BJ (cell line): ENCODE measurements at regions of chr9 and their contacts with region 1.

Region 1: DNA sequence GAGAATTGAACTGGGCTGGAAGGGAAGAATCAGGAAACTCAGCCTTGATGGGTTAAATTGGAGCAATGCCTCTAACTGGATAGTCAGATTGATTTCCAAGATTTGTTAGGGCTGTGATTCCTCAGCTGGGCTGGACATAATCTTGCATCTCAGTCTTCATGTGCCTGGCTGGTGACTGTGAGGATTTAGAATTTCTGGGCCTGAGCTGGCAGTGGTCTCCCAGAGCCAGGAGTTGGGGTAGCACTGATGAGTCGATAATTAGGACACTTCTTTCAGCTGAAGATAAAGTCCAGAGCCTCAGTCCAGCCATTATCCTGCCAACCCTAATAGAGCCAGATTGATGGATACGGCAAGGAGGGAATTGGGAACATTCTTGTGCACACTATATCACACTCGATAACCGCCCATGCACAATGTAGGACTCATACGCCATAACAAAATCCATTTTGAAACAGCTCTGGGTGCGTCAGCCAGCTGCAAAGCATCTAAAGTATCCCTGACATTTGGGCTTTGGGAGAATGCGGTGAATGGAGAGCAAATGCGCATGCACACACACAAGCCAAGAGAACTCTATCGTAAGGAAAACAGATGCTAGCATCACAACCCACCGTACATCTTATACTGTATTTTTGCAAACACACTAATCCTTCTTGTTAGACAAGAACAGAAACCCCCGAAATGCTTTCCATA is 405.1 kb upstream of the KLF4 start:
- DNase-seq: peak; percentile 59
- H3K4me3 ChIP-seq: no peak overlapping the region
- H3K27me3 ChIP-seq: no peaks in the 10 kb centered on the region
- CTCF ChIP-seq: no peak

Region 2: DNA sequence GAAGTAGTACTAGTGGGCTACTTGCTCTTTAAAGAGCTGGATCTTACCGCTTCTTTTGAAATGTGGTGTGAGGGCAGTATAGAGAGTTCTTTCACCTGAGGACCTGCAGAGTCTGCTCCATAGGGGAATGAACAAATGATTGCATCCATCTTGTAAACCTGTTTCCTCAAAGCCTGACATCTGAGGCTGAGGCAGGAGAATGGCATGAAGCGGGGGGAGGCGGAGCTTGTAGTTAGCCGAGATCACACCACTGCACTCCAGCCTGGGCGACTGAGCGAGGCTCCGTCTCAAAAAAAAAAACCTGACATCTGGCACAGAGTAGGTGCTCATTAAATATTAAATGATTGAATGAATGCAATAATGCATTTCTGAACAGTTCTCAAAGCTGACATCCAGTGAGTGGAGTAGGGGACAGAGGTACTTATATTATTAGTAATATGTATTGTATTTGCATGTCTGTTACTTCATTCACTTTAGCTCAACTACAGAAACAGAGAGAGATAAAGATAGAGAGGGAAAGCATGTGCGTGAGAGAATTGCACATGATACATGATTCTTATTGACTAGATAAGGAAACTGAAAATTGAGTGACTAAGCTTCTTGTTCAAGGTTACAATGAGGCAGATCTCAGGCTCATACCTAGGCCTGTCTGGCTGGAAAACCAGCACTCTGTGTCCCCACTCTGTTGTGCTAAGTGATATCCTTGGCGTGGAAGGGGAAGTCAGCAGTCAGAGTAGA is 67.6 kb before region 1 on chr9:
- CTCF ChIA-PET with region 1: no interaction called
- POLR2A ChIA-PET with region 1: no interaction called
- DNase-seq: no peak
- H3K4me3 ChIP-seq: no peak overlapping the region
- H3K27me3 ChIP-seq: 0 out of 2 replicates have a peak, but pooled peaks cover 1% of the 10 kb centered on the region
- CTCF ChIP-seq: no peak

Region 3: DNA sequence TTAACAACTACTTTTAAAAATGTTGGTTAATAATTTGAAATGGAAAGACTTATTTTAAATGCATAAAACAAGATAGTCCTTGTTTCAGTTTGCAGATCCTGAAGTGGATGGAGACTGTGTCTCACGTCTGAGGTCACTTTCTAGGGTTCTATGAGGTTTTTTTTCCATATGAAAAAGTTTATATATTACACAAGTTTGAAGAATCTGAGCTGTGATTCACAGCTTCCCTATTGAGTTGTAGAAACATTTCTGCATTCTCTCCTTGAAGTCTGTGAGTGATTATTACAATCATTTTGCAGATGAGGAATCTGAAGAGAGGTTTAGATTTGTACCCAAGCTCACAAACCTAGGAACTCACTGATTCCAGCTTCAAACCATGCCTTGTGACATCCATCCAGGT is 37.3 kb after region 1 on chr9:
- CTCF ChIA-PET with region 1: no interaction called
- POLR2A ChIA-PET with region 1: interaction called, 15 read pairs
- DNase-seq: peak; percentile 12
- H3K4me3 ChIP-seq: no peak overlapping the region
- H3K27me3 ChIP-seq: no peaks in the 10 kb centered on the region
- CTCF ChIP-seq: no peak